GM12878 (cell line): ENCODE measurements at regions of chr10 and their contacts with region 1.

Region 1: DNA sequence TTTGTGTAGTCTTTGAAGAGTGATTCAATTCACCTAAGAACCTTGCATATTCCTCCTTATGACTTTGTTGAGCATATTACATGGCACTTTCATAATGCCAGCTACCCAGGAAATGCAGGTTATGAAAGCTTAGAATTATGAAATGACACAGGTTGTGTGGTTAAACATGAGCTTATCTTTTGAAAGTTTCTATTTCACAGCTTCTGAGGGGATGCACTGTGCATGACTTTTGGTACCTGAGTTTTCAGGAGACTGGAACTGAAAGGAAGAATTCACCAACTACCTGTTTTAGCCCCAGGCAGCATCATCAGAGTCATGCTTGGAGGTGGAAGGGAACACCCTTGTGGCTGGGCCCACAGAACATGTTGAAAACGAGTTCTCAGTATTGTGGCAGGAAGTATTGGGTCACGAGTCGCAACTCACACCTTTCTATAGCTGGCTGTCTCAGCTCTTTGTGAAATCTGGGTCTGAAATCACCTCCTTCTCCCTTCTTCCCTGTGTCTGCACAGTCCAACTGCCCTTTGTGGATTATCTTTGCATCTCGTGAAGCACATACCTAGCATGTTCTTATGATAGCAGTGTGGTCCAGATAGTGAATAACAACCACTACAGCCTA is 228.2 kb downstream of the PTEN start:
- DNase-seq: peak; percentile 98
- ATAC-seq: peak; percentile 88
- H3K4me3 ChIP-seq: 0 out of 2 replicates have a peak overlapping the region, but pooled peaks have one; percentile 20
- H3K27ac ChIP-seq: peak overlapping the region; percentile 97
- H3K4me1 ChIP-seq: peaks cover 31% of the 10 kb centered on the region
- H3K27me3 ChIP-seq: no peaks in the 10 kb centered on the region
- CTCF ChIP-seq: peak in 1 of 3 experiments; percentile 23; a peak in 1 of 6 replicates
- EP300 ChIP-seq: peak; percentile 92 to 94
- POLR2A ChIP-seq: no peak
- RAD21 ChIP-seq: peak; percentile 51

Region 2: DNA sequence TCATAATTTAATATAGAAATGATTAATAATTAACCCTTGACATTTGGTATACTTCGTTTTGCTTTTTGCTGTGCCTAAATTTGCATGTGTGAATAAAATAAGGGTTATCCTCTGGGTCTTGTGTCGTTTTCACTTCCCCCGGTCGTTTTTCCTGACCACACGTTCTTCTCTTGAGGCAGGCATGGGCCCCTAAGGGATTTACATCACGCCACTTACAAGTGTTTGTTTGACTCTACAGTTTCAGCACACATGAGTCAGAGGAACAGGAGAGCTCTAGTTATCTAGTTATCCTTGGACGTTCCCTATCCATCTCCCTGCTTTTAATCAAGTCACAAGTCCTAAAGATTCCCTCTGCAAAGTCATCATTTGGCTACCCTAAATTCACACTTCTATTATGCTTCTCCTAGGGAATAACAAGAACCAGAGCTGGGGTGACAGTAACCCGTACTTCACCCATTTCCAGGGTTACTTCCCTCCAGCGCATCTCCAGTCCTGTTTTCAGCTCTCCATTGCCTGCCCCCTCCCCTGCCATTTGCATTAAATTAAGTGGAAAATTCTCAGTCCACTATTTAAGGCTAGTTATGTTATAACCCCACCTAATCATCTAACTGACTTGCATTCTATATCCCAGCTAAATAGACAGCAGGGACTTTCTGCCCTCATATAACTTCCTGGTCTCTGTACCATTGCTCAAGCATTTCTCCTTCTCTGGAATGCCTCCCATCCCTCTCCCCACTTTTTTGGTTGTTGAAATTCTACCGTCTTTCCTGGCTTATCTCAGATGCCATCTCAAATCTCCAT is 21.3 kb before region 1 on chr10:
- CTCF ChIA-PET with region 1: interaction called, 36 read pairs
- POLR2A ChIA-PET with region 1: interaction called, 9 read pairs
- RAD21 ChIA-PET with region 1: interaction called, 89 read pairs
- SMC1A ChIA-PET with region 1: interaction called, 116 read pairs
- in situ Hi-C with region 1: no loop called
- intact Hi-C with region 1: loop called (anchors 1 kb)
- DNase-seq: peak; percentile 92
- ATAC-seq: peak; percentile 74
- H3K4me3 ChIP-seq: 0 out of 2 replicates have a peak overlapping the region, but pooled peaks have one; percentile 18
- H3K27ac ChIP-seq: peak overlapping the region; percentile 73
- H3K4me1 ChIP-seq: peaks cover 69% of the 10 kb centered on the region
- H3K27me3 ChIP-seq: no peaks in the 10 kb centered on the region
- CTCF ChIP-seq: no peak
- EP300 ChIP-seq: peak; percentile 97 to 99; a peak in 3 of 4 replicates
- POLR2A ChIP-seq: no peak
- RAD21 ChIP-seq: peak; percentile 33; the same call in 1 of the 2 replicates

Region 3: GRCh38 chr10:88108115-88108610 is 16.6 kb after region 1 on chr10:
- CTCF ChIA-PET with region 1: interaction called, 33 read pairs
- POLR2A ChIA-PET with region 1: interaction called, 6 read pairs
- RAD21 ChIA-PET with region 1: interaction called, 65 read pairs
- SMC1A ChIA-PET with region 1: interaction called, 210 read pairs
- in situ Hi-C with region 1: no loop called
- intact Hi-C with region 1: loop called (anchors 1 kb)
- DNase-seq: peak; percentile 94
- ATAC-seq: peak; percentile 56
- H3K4me3 ChIP-seq: no peak overlapping the region
- H3K27ac ChIP-seq: peak overlapping the region; percentile 92
- H3K4me1 ChIP-seq: peaks cover 92% of the 10 kb centered on the region
- H3K27me3 ChIP-seq: no peaks in the 10 kb centered on the region
- CTCF ChIP-seq: peak; percentile 39 to 46 (median 45); a peak in 5 of 6 replicates
- EP300 ChIP-seq: peak; percentile 69 to 76; a peak in 2 of 4 replicates
- POLR2A ChIP-seq: no peak
- RAD21 ChIP-seq: peak; percentile 41; the same call in 1 of the 2 replicates

Region 4: GRCh38 chr10:88270871-88271713 is 179.5 kb after region 1 on chr10:
- CTCF ChIA-PET with region 1: no interaction called
- POLR2A ChIA-PET with region 1: no interaction called
- RAD21 ChIA-PET with region 1: interaction called, 8 read pairs
- SMC1A ChIA-PET with region 1: interaction called, 8 read pairs
- in situ Hi-C with region 1: no loop called
- intact Hi-C with region 1: loop called (anchors 1 kb)
- DNase-seq: peak; percentile 97
- ATAC-seq: peak; percentile 95
- H3K4me3 ChIP-seq: no peak overlapping the region; the same call in 1 of the 2 replicates
- H3K27ac ChIP-seq: peak overlapping the region; percentile 96
- H3K4me1 ChIP-seq: peaks cover 48% of the 10 kb centered on the region
- H3K27me3 ChIP-seq: no peaks in the 10 kb centered on the region
- CTCF ChIP-seq: no peak
- EP300 ChIP-seq: peak; percentile 93 to 95
- POLR2A ChIP-seq: peak; percentile 7; the same call in 1 of the 2 replicates
- RAD21 ChIP-seq: peak; percentile 17; the same call in 1 of the 2 replicates